H1 (cell line): ENCODE measurements at regions of chr1 and their contacts with region 1.

Region 1: DNA sequence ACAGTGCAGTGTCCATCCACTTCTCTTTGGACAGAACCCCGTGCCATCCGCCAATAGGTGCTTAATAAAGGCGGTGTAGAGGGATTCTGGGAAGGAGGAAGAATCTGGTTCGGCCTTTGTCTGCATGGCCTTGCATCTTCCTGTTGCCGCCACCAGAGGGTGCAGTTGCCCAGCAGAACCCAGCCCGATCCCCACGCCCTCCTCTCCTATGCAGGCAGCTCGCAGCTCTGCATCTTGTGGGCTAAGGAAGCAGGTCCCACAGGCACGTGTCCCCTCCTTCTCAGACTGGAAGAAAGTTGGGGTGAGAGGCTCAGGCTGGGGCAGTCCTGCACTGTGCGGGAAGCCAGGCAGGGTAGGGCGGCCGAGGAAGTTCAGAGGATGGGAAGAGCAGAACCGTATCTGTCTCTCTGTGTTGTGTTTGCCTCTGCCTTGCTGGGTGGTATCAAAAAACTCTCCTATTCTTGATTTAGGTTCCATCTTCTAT is 20.8 kb downstream of the NAV1 start:
- DNase-seq: peak; percentile 72 to 88
- H3K4me3 ChIP-seq: no peak overlapping the region
- H3K27ac ChIP-seq: no peak overlapping the region
- H3K4me1 ChIP-seq: peaks cover 0 to 8% (median 3%) of the 10 kb centered on the region in 4 experiments; a peak in 4 of 7 replicates
- H3K27me3 ChIP-seq: 0 out of 7 replicates have a peak, but pooled peaks cover 0 to 2% (median 0%) of the 10 kb centered on the region in 4 experiments
- CTCF ChIP-seq: peak; percentile 95 to 99 (median 98)
- EP300 ChIP-seq: 0 out of 3 replicates have a peak, but pooled peaks of 1 of the 2 experiments have one; percentile 20
- POLR2A ChIP-seq: no peak
- RAD21 ChIP-seq: peak; percentile 100

Region 2: DNA sequence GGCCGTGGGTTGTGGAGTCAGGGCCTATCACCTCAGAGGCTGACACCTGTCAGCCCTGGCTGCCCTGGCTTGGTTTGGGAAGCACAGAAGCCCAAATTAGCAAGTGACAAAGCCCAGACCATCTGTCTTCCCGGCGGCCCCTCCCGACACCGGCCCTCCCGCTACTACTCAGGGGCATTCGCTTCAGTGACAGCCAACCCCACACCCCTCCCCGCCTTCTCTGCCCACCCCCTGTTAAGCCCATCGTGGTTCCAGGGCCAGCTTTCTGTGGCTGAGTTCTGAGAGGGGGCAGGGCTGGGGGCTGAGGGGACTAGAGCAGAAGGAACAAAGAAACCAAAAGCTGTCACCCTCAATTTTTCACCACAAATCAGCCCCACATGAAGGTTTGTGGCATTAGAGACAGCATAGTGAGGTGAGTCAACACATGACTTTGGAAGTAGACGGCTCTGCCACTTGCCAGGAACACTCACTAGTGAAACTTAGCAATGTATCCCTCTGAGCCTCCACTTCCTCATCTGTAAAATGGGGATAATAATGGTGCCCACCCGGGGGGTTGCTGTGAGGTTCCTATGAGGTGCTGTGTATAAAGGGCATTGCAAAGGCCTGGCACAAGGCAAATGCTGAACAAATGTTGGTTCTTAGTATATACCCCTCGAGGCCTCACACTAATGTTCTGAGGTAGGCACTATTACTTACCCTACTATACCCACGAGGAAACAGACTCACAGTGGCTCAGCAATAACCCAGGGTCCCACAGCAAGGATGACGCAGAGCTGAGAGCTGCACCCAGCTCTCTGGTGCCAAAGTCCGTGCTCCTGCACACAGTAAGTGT is 133.0 kb before region 1 on chr1:
- CTCF ChIA-PET with region 1: no interaction called
- POLR2A ChIA-PET with region 1: no interaction called
- DNase-seq: no peak
- H3K4me3 ChIP-seq: no peak overlapping the region
- H3K27ac ChIP-seq: no peak overlapping the region
- H3K4me1 ChIP-seq: peaks cover 0 to 2% (median 0%) of the 10 kb centered on the region in 4 experiments; a peak in 1 of 7 replicates
- H3K27me3 ChIP-seq: no peaks in the 10 kb centered on the region
- CTCF ChIP-seq: no peak
- EP300 ChIP-seq: no peak
- POLR2A ChIP-seq: no peak
- RAD21 ChIP-seq: no peak

Region 3: DNA sequence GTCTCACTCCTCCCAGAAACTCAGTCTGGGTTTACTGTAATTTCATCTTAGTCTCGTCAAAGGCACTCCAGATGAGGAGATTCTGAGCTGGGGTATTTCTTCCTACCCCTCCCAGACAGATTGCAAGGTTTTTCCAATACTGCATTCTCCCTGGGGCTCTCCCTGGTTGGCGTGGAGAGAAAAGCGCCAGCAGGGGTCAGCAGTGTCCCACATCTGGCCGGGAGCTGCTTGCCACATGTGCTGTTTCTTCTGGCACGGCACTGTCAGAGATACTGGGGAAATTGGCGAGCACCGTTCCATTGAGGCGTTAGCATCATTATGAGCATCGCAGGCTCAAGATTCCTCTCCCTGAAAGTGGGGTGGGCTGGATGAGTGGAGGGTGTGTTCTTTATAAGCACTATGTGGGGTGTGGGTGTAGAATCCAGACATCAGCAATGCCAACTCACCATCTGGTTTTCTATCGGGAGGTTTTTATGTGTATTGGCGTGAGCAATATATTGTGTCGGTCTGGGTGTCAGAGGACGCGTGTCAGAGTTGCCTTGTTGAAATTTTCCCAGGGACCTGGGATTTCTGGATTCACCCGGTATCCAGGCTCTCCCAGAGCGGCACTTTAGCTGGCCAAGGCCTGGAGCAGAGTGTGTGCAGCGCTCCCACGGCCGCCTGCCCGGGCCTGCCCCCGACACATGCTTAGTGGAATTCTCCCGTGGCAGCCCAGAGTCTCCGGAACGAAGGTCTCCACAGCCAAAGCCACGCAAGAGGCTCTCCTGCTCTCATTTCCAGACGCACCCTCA is 28.8 kb before region 1 on chr1:
- CTCF ChIA-PET with region 1: interaction called, 107 read pairs
- POLR2A ChIA-PET with region 1: no interaction called
- DNase-seq: peak in 1 of 2 experiments; percentile 90
- H3K4me3 ChIP-seq: no peak overlapping the region
- H3K27ac ChIP-seq: no peak overlapping the region
- H3K4me1 ChIP-seq: peaks cover 0 to 5% (median 3%) of the 10 kb centered on the region in 4 experiments; a peak in 3 of 7 replicates
- H3K27me3 ChIP-seq: no peaks in the 10 kb centered on the region
- CTCF ChIP-seq: peak; percentile 88 to 92 (median 91)
- EP300 ChIP-seq: no peak
- POLR2A ChIP-seq: no peak
- RAD21 ChIP-seq: peak; percentile 96

Region 4: DNA sequence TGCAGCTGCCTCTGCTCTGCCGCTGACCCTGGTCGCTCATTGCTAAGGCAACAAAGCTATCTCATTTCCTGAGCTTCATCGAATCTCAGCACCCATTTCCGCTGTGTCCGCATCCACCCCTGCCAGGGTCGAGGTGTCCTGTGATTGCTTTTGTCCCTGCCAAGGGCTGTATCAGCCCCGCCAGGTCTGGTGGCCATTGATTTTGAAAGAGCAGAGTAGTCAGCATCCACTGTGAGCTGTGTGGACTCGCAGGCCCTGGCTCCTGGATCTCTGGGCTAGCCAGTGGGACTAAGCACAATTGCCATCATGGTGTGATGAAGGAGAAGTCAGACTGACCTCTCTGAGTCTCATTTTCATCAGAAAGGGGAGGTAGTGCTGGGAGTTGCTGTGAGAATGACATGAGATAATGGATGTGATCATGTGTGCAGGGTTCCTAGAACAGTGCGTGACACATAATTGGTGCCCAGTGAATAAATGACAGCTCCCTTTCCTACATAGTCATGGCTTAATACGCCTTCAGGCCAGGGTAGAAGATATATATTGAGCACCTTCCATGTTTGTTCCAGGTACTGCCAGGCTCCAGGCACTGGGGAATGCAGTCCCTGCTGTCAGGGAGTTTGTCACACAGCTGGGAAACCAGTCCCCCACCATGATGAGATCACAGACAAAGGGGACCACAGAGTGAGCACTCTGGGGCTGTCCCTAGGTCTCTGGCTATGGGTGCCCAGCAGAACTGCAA is 11.3 kb after region 1 on chr1:
- CTCF ChIA-PET with region 1: interaction called, 62 read pairs
- POLR2A ChIA-PET with region 1: no interaction called
- DNase-seq: no peak
- H3K4me3 ChIP-seq: no peak overlapping the region
- H3K27ac ChIP-seq: no peak overlapping the region
- H3K4me1 ChIP-seq: no peaks in the 10 kb centered on the region; a peak in 1 of 7 replicates
- H3K27me3 ChIP-seq: no peaks in the 10 kb centered on the region
- CTCF ChIP-seq: no peak
- EP300 ChIP-seq: no peak
- POLR2A ChIP-seq: no peak
- RAD21 ChIP-seq: no peak

Region 5: DNA sequence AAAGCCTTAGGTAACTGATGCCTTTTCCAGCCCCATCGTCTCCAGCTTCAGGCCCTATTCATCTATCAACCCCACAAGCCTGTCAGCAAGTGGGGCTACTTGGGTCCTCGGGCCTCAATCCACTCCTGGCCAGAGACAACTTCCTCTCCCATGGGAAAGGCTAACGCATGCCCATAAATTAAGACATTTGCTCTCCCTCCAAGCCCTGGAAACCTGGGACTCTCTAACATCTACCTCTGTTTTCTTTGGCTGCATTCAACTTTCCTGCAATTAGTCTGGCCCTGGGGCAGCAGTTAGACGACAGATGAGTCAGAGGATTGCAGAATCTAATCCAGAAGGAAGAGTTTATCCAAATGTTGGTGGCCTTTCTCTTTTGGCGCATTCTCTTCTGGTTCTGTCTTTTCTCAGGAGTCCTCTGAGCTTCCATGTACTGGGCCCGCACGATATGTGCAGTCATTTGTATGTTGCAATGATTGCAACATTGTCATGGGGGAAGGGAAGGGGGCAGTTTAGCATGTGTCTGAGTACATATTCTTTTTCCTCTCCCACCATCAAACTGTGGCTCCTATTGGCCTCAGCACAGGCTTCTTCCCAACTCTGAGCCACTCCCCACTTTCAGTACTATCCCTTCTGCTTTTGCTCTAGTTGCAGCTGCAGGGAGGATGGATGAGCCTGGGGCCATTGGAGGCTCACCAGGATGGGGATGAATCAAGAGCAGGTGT is 33.6 kb after region 1 on chr1:
- CTCF ChIA-PET with region 1: interaction called, 79 read pairs
- POLR2A ChIA-PET with region 1: interaction called, 3 read pairs
- DNase-seq: no peak
- H3K4me3 ChIP-seq: no peak overlapping the region
- H3K27ac ChIP-seq: no peak overlapping the region
- H3K4me1 ChIP-seq: peaks cover 11 to 31% (median 22%) of the 10 kb centered on the region in 4 experiments
- H3K27me3 ChIP-seq: no peaks in the 10 kb centered on the region; a peak in 1 of 7 replicates
- CTCF ChIP-seq: no peak
- EP300 ChIP-seq: no peak
- POLR2A ChIP-seq: no peak
- RAD21 ChIP-seq: no peak

Region 6: DNA sequence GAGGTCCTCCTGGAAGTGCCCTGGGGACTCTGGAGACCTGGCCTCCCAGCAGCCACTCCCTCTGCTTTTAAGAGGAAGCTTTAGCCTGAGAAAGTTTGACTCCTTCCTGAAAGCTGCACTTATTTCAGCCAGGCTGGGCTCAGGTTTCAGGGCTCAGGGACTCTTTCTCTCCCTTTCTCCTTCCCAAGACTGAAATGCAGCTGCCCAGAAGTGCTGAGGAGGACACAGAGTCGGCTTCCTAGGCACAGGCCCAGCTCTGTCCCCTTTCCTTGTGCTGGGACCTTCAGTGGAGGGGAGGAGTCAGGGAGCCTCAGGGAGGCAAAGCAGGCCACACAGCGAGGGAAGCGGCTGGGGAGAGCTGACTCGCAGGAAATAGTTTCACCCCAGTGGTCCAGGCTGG is 116.5 kb after region 1 on chr1:
- CTCF ChIA-PET with region 1: interaction called, 10 read pairs
- POLR2A ChIA-PET with region 1: interaction called, 3 read pairs
- DNase-seq: no peak
- H3K4me3 ChIP-seq: no peak overlapping the region
- H3K27ac ChIP-seq: peak overlapping the region; percentile 64; the same call in 1 of the 2 replicates
- H3K4me1 ChIP-seq: peaks cover 7 to 35% (median 24%) of the 10 kb centered on the region in 4 experiments
- H3K27me3 ChIP-seq: no peaks in the 10 kb centered on the region
- CTCF ChIP-seq: no peak
- EP300 ChIP-seq: no peak
- POLR2A ChIP-seq: no peak
- RAD21 ChIP-seq: no peak

Region 7: DNA sequence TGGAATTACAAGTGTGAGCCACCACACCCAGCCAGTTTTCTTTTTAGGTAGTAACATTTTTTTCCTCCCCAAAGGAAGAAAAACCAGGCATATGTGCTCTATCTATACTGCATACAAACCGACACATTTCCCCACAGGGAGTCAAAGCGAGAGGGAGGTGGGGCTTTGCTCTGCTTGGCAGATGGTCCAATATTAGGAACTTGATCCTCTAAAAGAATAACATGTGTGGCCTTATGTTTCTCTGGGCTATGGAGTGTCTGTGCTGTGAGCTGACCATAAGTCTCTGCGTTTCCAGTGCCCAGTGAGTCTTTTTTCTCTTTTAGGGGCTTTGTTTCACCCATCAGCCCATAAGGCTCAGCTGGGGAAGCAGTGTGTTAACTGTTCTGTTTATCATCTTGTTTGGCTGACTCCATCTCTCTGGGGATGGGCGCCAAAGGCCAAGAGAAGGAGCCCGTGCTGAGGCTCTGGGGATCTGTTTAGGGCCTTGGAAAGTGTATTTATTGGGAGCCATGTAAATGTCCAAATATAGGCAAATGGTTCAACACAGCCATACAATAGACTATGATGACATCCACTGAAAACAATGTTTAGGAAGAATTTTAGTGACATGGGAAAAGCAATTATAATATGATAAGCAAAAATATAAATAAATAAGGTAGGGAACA is 366.4 kb after region 1 on chr1:
- CTCF ChIA-PET with region 1: no interaction called
- POLR2A ChIA-PET with region 1: no interaction called
- DNase-seq: no peak
- H3K4me3 ChIP-seq: no peak overlapping the region
- H3K27ac ChIP-seq: no peak overlapping the region
- H3K4me1 ChIP-seq: no peaks in the 10 kb centered on the region
- H3K27me3 ChIP-seq: no peaks in the 10 kb centered on the region
- CTCF ChIP-seq: no peak
- EP300 ChIP-seq: no peak
- POLR2A ChIP-seq: no peak
- RAD21 ChIP-seq: no peak